Activated CD8-positive, alpha-beta T cell treated with anti-CD3 and anti-CD28 coated beads for 36 hours (primary cell): ENCODE measurements at regions of chr6 and their contacts with region 1.

Region 1: GRCh38 chr6:130138116-130138908 is 84.4 kb downstream of the SAMD3 start:
- DNase-seq: no peak
- ATAC-seq: peak; percentile 60
- H3K4me3 Mint-ChIP-seq: peak overlapping the region; percentile 66
- H3K27ac Mint-ChIP-seq: peak overlapping the region; percentile 84
- H3K4me1 Mint-ChIP-seq: peaks cover 58% of the 10 kb centered on the region
- H3K27me3 Mint-ChIP-seq: no peaks in the 10 kb centered on the region
- CTCF ChIP-seq: no peak

Region 2: DNA sequence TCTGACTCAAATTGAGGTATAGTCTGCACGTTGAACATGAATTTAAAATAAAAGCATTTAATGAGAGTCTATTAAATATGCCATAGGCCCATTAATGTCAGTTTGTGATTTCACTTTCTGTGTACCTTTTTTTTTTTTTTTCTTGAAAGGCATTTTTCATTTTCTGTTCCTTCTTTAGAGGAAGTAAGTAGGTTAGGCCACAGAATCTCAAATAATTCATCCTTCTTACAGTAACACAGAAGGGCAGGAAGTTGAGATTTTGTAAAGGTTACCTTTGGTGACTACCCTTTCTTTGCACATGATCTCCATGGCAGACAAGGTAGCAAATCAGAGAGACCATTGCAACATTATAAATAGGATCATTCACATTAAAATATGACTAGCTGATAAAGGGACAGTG is 110.4 kb before region 1 on chr6:
- CTCF ChIA-PET with region 1: no interaction called
- POLR2A ChIA-PET with region 1: no interaction called
- intact Hi-C with region 1: loop called (anchors 5 kb)
- DNase-seq: no peak
- ATAC-seq: peak; percentile 80
- H3K4me3 Mint-ChIP-seq: peak overlapping the region; percentile 31
- H3K27ac Mint-ChIP-seq: peak overlapping the region; percentile 85
- H3K4me1 Mint-ChIP-seq: peaks cover 75% of the 10 kb centered on the region
- H3K27me3 Mint-ChIP-seq: no peaks in the 10 kb centered on the region
- CTCF ChIP-seq: no peak

Region 3: GRCh38 chr6:130050230-130050629 is 88.1 kb before region 1 on chr6:
- CTCF ChIA-PET with region 1: no interaction called
- POLR2A ChIA-PET with region 1: no interaction called
- intact Hi-C with region 1: no loop called
- DNase-seq: no peak
- ATAC-seq: no peak
- H3K4me3 Mint-ChIP-seq: no peak overlapping the region
- H3K27ac Mint-ChIP-seq: no peak overlapping the region
- H3K4me1 Mint-ChIP-seq: peaks cover 3% of the 10 kb centered on the region
- H3K27me3 Mint-ChIP-seq: no peaks in the 10 kb centered on the region
- CTCF ChIP-seq: no peak

Region 4: GRCh38 chr6:130127195-130127594 is 11.1 kb before region 1 on chr6:
- CTCF ChIA-PET with region 1: no interaction called
- POLR2A ChIA-PET with region 1: no interaction called
- intact Hi-C with region 1: no loop called
- DNase-seq: no peak
- ATAC-seq: no peak
- H3K4me3 Mint-ChIP-seq: no peak overlapping the region
- H3K27ac Mint-ChIP-seq: no peak overlapping the region
- H3K4me1 Mint-ChIP-seq: peaks cover 49% of the 10 kb centered on the region
- H3K27me3 Mint-ChIP-seq: no peaks in the 10 kb centered on the region
- CTCF ChIP-seq: no peak

Region 5: DNA sequence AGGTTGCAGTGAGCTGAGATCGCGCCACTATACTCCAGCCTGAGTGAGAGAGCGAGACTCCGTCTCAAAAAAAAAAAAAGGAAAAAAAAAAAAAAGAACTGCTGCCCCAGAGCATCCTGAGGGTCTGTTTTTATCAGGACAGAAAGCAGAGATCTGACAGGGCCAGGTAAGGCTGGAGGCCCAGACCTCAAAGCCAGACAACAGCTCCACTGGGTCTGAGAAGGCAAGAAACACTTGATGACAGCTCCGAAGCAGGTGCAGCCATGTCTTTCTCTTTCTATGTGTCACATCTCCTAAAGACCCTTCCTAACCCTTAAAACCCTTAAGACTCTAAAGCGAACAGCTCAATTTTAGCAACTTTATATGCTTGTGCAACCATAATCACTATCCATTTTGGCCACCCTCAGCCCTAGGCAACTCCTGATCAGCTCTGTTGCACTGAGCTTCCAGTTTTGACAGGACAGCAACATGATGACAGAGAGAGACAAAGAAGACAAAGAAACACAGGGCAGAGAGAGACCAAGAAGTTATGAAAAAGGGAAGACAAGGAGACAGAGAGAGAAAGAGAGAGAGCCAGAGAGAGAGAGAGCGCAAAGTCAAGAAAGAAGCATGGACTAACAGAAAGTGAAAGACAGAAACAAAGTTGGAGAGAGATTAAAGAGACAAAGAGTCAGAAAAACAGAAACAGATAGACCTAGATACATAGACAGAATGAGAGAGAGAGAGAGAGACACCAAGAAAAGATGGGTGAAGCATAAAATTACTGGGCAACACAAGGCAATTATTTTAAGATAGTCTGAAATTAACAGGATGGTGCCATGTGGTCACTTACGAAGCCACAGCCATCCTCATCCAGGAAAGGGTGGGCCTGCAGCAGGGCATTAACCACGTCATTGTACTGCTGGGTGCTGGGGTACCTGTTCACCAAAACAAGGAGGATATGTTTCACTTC is 45.2 kb after region 1 on chr6:
- CTCF ChIA-PET with region 1: no interaction called
- POLR2A ChIA-PET with region 1: no interaction called
- intact Hi-C with region 1: loop called (anchors 5 kb)
- DNase-seq: peak; percentile 69
- ATAC-seq: peak; percentile 89
- H3K4me3 Mint-ChIP-seq: peak overlapping the region; percentile 67
- H3K27ac Mint-ChIP-seq: peak overlapping the region; percentile 94
- H3K4me1 Mint-ChIP-seq: peaks cover 47% of the 10 kb centered on the region
- H3K27me3 Mint-ChIP-seq: no peaks in the 10 kb centered on the region
- CTCF ChIP-seq: no peak